Activated T-helper 2 cell treated with anti-CD3 and anti-CD28 coated beads, Interferon-gamma antibody, Interleukin-2, Interleukin-4, amounts not matched to agents 10 μg/mL and 5 μg/mL and 100 μg/mL, durations not matched to agents 14 hours and 24 hours and 36 hours (primary cell): ENCODE measurements at regions of chr3 and their contacts with region 1.

Region 1: GRCh38 chr3:4804161-4805058 is 174.8 kb upstream of the BHLHE40 start:
- DNase-seq: peak; percentile 31
- H3K4me3 Mint-ChIP-seq: peak overlapping the region; percentile 35
- H3K27ac Mint-ChIP-seq: peak overlapping the region; percentile 78
- H3K4me1 Mint-ChIP-seq: peaks cover 62% of the 10 kb centered on the region
- H3K27me3 Mint-ChIP-seq: no peaks in the 10 kb centered on the region

Region 2: DNA sequence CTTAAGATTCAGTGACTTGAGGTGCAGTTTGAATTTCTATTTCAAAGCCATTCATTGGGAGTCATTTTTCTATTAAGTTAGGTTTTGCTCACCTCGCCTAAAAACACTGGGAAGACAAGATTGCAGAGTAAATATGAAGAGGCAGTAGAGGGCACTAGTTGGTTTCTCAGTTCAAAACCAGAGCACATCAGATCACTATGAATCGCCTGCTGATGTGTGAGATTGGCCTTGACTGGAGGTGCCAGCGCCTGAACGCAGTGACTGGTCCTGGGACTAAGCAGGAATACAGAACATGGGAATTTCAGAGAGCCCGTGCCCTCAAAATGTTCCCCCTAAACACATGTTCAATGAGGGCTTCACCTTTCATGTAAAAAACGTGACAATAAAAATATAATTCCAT is 82.3 kb before region 1 on chr3:
- intact Hi-C with region 1: loop called (anchors 2 kb)
- DNase-seq: peak; percentile 23
- H3K4me3 Mint-ChIP-seq: no peak overlapping the region
- H3K27ac Mint-ChIP-seq: peak overlapping the region; percentile 63
- H3K4me1 Mint-ChIP-seq: peaks cover 53% of the 10 kb centered on the region
- H3K27me3 Mint-ChIP-seq: no peaks in the 10 kb centered on the region

Region 3: GRCh38 chr3:4741404-4742307 is 62.8 kb before region 1 on chr3:
- intact Hi-C with region 1: loop called (anchors 1 kb)
- DNase-seq: no peak
- H3K4me3 Mint-ChIP-seq: no peak overlapping the region
- H3K27ac Mint-ChIP-seq: peak overlapping the region; percentile 87
- H3K4me1 Mint-ChIP-seq: peaks cover 67% of the 10 kb centered on the region
- H3K27me3 Mint-ChIP-seq: no peaks in the 10 kb centered on the region

Region 4: GRCh38 chr3:4821975-4822374 is 17.6 kb after region 1 on chr3:
- intact Hi-C with region 1: loop called (anchors 1 kb)
- DNase-seq: peak; percentile 77
- H3K4me3 Mint-ChIP-seq: peak overlapping the region; percentile 20
- H3K27ac Mint-ChIP-seq: peak overlapping the region; percentile 93
- H3K4me1 Mint-ChIP-seq: peaks cover 84% of the 10 kb centered on the region
- H3K27me3 Mint-ChIP-seq: no peaks in the 10 kb centered on the region

Region 5: GRCh38 chr3:4850928-4851265 is 46.5 kb after region 1 on chr3:
- intact Hi-C with region 1: loop called (anchors 1 kb)
- DNase-seq: no peak
- H3K4me3 Mint-ChIP-seq: peak overlapping the region; percentile 28
- H3K27ac Mint-ChIP-seq: peak overlapping the region; percentile 97
- H3K4me1 Mint-ChIP-seq: peaks cover 81% of the 10 kb centered on the region
- H3K27me3 Mint-ChIP-seq: no peaks in the 10 kb centered on the region